Transverse colon (tissue), 4 donors: ENCODE measurements at regions of chr4 and their contacts with region 1.

Region 1: GRCh38 chr4:42955746-42956505 is 63.4 kb downstream of the GRXCR1 start:
- DNase-seq: no peak
- H3K4me3 ChIP-seq: no peak overlapping the region
- H3K27ac ChIP-seq: no peak overlapping the region
- H3K4me1 ChIP-seq: no peaks in the 10 kb centered on the region
- H3K27me3 ChIP-seq: no peaks in the 10 kb centered on the region
- CTCF ChIP-seq: no peak
- EP300 ChIP-seq: no peak
- POLR2A ChIP-seq: no peak

Region 2: GRCh38 chr4:42904986-42905385 is 50.9 kb before region 1 on chr4:
- in situ Hi-C with region 1: no loop called
- intact Hi-C with region 1: loop called (anchors 2 kb)
- DNase-seq: no peak
- H3K4me3 ChIP-seq: no peak overlapping the region
- H3K27ac ChIP-seq: no peak overlapping the region
- H3K4me1 ChIP-seq: peaks cover 0 to 5% (median 0%) of the 10 kb centered on the region in 4 donors
- H3K27me3 ChIP-seq: no peaks in the 10 kb centered on the region
- CTCF ChIP-seq: no peak
- EP300 ChIP-seq: no peak
- POLR2A ChIP-seq: no peak

Region 3: GRCh38 chr4:43066415-43066814 is 110.5 kb after region 1 on chr4:
- in situ Hi-C with region 1: no loop called
- intact Hi-C with region 1: no loop called
- DNase-seq: no peak
- H3K4me3 ChIP-seq: no peak overlapping the region
- H3K27ac ChIP-seq: no peak overlapping the region
- H3K4me1 ChIP-seq: no peaks in the 10 kb centered on the region
- H3K27me3 ChIP-seq: no peaks in the 10 kb centered on the region
- CTCF ChIP-seq: no peak
- EP300 ChIP-seq: no peak
- POLR2A ChIP-seq: no peak